ENCODE measurements at regions of chr4 and their contacts with region 1.

Region 1: DNA sequence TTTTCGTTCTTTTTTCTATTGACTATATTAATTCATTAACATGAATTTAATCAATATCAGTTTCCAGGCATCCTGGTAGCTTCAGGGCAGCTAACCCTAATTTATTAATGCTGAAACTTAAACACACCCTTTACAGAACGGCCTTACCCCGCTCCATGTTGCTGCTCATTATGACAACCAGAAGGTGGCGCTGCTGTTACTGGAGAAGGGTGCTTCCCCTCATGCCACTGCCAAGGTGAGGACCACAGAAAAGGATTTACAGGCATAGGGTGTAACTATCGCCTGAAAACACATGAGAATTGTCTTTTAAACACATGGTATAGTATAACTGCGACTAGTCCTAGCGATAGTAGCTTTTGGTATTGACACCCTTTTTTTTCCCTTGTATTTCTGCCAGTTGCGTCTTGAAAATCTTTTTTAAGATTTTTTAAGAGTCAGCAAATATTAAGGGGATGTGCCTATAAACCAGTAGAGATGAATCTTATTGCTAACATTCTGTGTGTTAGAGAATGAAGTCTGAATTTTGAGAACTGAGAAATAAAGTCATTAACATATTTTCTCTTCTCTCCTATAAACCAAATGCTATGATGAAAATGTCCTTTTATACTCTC is 229.0 kb downstream of the ANK2 start:
- DNase-seq: peak; percentile 80
- ATAC-seq: peak; percentile 94
- H3K4me3 Mint-ChIP-seq: no peak overlapping the region
- H3K27ac Mint-ChIP-seq: no peak overlapping the region
- H3K4me1 Mint-ChIP-seq: no peaks in the 10 kb centered on the region
- H3K27me3 Mint-ChIP-seq: peaks cover 13% of the 10 kb centered on the region
- CTCF ChIP-seq: peak; percentile 74

Region 2: DNA sequence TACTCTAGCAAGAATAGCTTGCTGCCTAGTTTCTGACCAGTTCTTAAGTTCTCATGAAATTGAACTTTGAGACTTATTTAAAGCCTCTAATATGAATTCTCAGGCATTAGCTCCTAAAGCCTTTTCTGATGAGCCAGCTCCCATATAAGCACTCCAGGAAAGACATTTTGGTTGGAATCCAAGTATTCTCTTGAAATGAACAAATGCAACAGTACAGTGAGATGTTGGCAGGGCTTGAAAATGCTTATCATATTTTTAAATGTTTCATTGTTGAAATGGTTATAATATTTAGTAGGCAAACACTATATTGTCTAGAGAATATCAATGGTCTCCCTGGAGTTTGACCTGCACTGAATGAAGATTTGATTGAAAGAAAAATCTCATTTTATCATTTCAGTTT is 11.3 kb after region 1 on chr4:
- CTCF ChIA-PET with region 1: interaction called, 10 read pairs
- POLR2A ChIA-PET with region 1: no interaction called
- intact Hi-C with region 1: no loop called
- DNase-seq: no peak
- ATAC-seq: no peak
- H3K4me3 Mint-ChIP-seq: no peak overlapping the region
- H3K27ac Mint-ChIP-seq: no peak overlapping the region
- H3K4me1 Mint-ChIP-seq: no peaks in the 10 kb centered on the region
- H3K27me3 Mint-ChIP-seq: peaks cover 12% of the 10 kb centered on the region
- CTCF ChIP-seq: no peak

Region 3: DNA sequence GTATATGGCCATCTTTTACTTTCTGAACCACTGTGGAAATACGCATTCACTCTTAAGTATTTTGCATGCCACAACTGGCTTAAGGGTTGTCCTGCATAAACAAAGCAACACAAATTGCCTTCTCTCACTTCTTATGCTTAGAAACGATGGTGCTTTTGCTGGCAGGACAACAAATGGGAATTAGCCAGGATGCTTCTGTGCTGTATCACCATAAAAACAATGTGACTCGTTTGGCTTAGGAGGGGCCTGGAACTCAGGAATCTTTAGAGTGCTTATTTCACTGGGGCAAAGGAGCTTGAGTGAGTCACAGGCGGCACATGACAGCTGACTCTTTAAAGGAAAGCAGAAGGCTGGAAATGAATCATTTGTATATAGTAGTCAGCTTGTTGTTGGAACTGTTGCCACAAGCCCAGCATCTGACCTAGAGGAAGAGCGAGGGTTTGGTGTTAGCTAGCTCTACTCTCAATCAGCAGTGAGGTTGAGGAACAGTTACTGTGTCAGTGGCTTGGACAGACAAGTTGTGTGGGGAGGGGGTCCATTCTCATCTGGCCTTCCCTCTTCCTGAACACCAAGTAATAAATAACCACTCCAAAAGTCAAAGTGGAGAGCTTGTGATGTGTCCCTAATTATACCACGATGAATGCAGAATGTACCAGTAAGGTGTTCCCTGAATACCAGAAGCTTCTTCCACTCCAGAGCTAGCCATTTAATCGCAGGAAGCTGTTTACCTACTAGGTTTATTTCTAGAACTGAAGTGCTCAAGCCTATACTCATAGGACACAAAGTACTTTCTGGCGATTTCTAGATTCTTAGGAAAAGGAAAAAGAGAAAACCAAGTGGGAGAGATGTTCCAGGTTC is 190.0 kb after region 1 on chr4:
- CTCF ChIA-PET with region 1: no interaction called
- POLR2A ChIA-PET with region 1: no interaction called
- intact Hi-C with region 1: no loop called
- DNase-seq: peak; percentile 57
- ATAC-seq: peak; percentile 89
- H3K4me3 Mint-ChIP-seq: no peak overlapping the region
- H3K27ac Mint-ChIP-seq: peak overlapping the region; percentile 34
- H3K4me1 Mint-ChIP-seq: peaks cover 31% of the 10 kb centered on the region
- H3K27me3 Mint-ChIP-seq: no peaks in the 10 kb centered on the region
- CTCF ChIP-seq: no peak